A549 (cell line): ENCODE measurements at regions of chr9 and their contacts with region 1.

Region 1: DNA sequence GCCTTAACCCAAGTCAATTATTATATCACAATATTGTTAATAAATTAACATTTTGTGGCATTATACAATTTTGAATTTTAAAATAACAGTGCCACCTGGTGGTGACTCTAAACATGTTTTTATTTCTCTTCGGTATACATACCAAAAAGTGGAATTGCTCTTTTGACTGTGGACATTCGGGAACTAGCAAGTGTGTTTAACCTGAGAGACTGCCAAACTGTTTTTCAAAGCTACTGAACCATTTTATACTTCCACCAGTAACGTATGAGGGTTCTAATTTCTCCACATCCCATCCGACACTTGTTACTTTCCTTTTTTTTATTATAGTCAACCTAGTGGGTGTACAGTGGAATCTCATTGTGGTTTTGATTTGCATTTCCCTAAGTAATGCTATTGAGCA is 18.3 kb upstream of the HSDL2 start:
- DNase-seq: peak in 1 of 2 experiments; percentile 60
- ATAC-seq: peak; percentile 59 to 75; a peak in 4 of 6 replicates
- H3K4me3 ChIP-seq: no peak overlapping the region
- H3K27ac ChIP-seq: no peak overlapping the region
- H3K4me1 ChIP-seq: peaks cover 13% of the 10 kb centered on the region
- CTCF ChIP-seq: peak; percentile 67
- EP300 ChIP-seq: no peak
- POLR2A ChIP-seq: no peak
- RAD21 ChIP-seq: peak; percentile 77 to 85

Region 2: DNA sequence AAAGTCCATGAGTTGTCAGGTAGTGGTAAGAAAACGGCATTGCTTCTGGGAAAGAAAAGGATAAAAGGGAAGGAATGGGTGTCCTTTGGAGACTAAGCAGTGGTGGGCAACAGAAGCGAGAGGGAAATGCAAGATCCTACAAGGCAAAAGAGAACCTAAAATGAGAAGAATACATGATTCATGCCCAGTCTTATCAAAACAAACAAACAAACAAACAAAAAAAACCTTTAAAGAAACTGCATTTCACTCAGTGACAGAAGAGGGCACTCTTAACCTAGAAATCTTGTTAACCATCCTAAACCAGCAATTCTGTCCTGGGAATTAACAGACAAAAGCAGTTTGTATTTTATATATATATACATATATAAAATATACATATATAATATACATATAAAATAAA is 275.0 kb before region 1 on chr9:
- CTCF ChIA-PET with region 1: interaction called, 19 read pairs
- POLR2A ChIA-PET with region 1: no interaction called
- DNase-seq: peak; percentile 40 to 52
- ATAC-seq: peak in 1 of 2 experiments; percentile 50; a peak in 2 of 6 replicates
- H3K4me3 ChIP-seq: no peak overlapping the region
- H3K27ac ChIP-seq: no peak overlapping the region
- H3K4me1 ChIP-seq: no peaks in the 10 kb centered on the region
- CTCF ChIP-seq: peak; percentile 81
- EP300 ChIP-seq: no peak
- POLR2A ChIP-seq: no peak
- RAD21 ChIP-seq: peak; percentile 80

Region 3: GRCh38 chr9:112097712-112098688 is 263.6 kb before region 1 on chr9:
- CTCF ChIA-PET with region 1: interaction called, 34 read pairs
- POLR2A ChIA-PET with region 1: no interaction called
- DNase-seq: peak; percentile 72 to 76
- ATAC-seq: peak; percentile 93 to 97
- H3K4me3 ChIP-seq: no peak overlapping the region
- H3K27ac ChIP-seq: peak overlapping the region; percentile 48 to 75; a peak in 4 of 6 replicates
- H3K4me1 ChIP-seq: peaks cover 4% of the 10 kb centered on the region
- CTCF ChIP-seq: peak; percentile 92
- EP300 ChIP-seq: no peak
- POLR2A ChIP-seq: no peak
- RAD21 ChIP-seq: peak; percentile 88 to 93

Region 4: DNA sequence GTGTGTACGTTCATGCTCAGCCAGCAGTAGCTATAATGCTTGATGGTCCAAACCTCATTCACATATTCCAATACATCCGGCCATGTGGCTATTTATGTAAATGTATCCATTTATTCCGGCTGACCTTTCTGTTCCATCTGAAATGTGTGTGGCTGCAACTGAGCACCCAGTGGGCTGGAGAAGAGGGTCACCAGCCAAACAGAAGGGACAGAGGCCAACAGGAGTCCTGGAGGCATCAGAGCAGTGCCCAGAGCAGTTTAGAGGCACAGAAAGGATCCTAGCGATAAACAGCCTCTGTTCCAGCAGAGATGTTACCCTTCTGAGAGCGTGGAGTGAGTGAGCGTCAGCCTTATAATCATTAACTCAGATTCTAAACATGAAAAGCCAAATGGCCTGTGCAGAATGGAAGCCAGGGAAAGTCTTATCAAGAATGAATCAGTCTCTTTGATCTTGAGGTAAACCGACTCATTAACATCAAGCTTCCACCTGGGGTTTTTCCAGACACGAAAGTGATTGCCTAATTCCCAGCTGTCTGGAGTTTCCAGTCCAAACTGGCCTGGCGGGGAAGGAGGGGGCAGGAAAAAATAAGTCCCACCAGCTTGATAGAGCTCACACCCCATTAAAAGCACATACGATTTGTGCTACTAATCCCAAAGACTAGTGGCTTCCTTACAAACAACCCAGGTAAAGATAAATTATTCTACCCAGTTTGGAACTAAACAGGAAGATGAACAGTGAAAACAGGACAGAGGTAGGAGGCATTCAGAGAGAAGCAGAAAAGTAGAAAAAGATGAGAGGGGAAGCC is 242.2 kb before region 1 on chr9:
- CTCF ChIA-PET with region 1: interaction called, 64 read pairs
- POLR2A ChIA-PET with region 1: no interaction called
- DNase-seq: peak; percentile 72 to 94
- ATAC-seq: peak; percentile 91 to 93
- H3K4me3 ChIP-seq: no peak overlapping the region
- H3K27ac ChIP-seq: peak overlapping the region; percentile 94 to 95
- H3K4me1 ChIP-seq: peaks cover 70% of the 10 kb centered on the region
- CTCF ChIP-seq: no peak
- EP300 ChIP-seq: peak; percentile 90 to 93
- POLR2A ChIP-seq: no peak
- RAD21 ChIP-seq: peak in 1 of 2 experiments; percentile 49; a peak in 3 of 5 replicates

Region 5: DNA sequence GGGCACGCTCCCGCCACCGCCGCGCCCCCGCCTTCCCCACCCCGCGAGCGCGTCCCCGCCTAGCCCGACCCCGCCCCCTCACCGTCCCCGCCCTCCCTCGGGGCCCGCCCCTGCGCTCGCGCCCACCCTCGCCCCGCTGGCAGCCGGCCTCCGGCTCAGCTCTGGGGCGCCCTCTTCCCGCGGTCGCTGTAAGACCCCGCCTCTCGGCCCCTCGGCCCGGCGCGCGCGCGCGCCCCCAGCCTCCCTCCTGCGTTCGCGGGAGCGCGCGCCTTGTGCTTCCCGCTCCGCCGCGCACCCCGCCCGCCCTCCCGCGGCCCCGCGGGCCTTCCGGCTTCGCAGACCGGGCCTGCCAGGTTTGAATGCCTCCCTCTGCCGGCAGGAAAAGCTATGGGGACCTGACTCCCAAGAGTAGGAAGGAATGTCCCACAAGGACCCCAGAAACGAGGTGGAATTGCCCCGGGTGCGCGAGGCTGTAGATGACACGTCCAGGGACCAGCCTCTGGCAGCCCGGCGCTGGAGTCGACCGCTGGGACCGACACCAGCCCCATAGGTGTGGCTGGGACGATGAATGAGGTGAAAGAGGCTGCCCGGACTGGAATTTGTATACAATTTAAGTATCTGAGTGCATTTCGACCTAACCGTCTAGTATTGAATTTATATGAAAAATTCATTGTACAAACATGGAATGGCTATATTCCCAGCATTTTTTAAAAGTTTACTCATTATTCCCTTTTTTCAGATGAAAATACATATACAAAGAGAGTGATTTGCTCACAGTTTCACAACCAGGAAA is 27.8 kb before region 1 on chr9:
- CTCF ChIA-PET with region 1: interaction called, 42 read pairs
- POLR2A ChIA-PET with region 1: interaction called, 4 read pairs
- DNase-seq: peak; percentile 90 to 95
- ATAC-seq: peak; percentile 68 to 78
- H3K4me3 ChIP-seq: peak overlapping the region; percentile 81
- H3K27ac ChIP-seq: peak overlapping the region; percentile 97
- H3K4me1 ChIP-seq: peaks cover 44% of the 10 kb centered on the region
- CTCF ChIP-seq: peak; percentile 68
- EP300 ChIP-seq: no peak
- POLR2A ChIP-seq: peak; percentile 56
- RAD21 ChIP-seq: peak; percentile 31 to 77

Region 6: GRCh38 chr9:112348257-112349007 is 13.2 kb before region 1 on chr9:
- CTCF ChIA-PET with region 1: interaction called, 42 read pairs
- POLR2A ChIA-PET with region 1: no interaction called
- DNase-seq: peak; percentile 83 to 95
- ATAC-seq: peak; percentile 92 to 96
- H3K4me3 ChIP-seq: peak overlapping the region; percentile 41
- H3K27ac ChIP-seq: peak overlapping the region; percentile 67 to 85
- H3K4me1 ChIP-seq: peaks cover 18% of the 10 kb centered on the region; the same call in 1 of the 3 replicates
- CTCF ChIP-seq: no peak
- EP300 ChIP-seq: no peak
- POLR2A ChIP-seq: peak; percentile 57
- RAD21 ChIP-seq: no peak

Region 7: GRCh38 chr9:112379177-112380101 is 17.8 kb after region 1 on chr9:
- CTCF ChIA-PET with region 1: interaction called, 14 read pairs
- POLR2A ChIA-PET with region 1: interaction called, 13 read pairs
- DNase-seq: peak; percentile 92 to 99
- ATAC-seq: peak; percentile 91 to 95
- H3K4me3 ChIP-seq: peak overlapping the region; percentile 70
- H3K27ac ChIP-seq: peak overlapping the region; percentile 90 to 93
- H3K4me1 ChIP-seq: peaks cover 28% of the 10 kb centered on the region; the same call in 2 of the 3 replicates
- CTCF ChIP-seq: no peak
- EP300 ChIP-seq: no peak
- POLR2A ChIP-seq: peak; percentile 93
- RAD21 ChIP-seq: no peak